ENCODE measurements at regions of chr2 and their contacts with region 1.

Region 1: DNA sequence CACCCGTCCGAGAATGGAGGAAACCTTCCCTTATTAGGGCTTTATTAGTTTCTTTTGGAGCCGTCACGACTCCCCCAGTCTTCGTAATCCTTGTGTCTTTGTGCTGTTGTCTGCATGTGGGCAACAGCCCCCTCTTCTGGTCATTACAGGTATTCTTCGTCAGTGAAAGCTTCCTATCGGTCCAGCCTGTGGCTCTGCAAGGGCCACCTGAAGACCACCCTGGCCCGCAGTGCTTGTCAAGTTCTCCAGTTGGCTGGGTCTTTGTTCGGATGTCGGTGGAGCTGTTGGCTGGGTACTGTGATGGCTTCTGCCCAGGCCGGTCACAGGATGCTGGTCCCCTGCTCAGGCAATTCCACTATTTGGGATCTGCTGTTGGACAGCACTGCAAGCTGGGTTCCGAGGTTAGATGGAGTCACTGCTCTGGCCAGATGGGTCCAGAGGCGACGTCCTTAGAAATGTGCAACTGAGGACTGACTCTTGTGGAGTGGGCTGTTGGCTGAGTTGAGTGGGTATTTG is 19.2 kb downstream of the E2F6 start:
- DNase-seq: peak; percentile 74
- H3K4me3 ChIP-seq: no peak overlapping the region
- H3K27ac ChIP-seq: no peak overlapping the region
- H3K4me1 ChIP-seq: no peaks in the 10 kb centered on the region
- H3K27me3 ChIP-seq: no peaks in the 10 kb centered on the region

Region 2: GRCh38 chr2:10832203-10832936 is 614.4 kb before region 1 on chr2:
- in situ Hi-C with region 1: loop called (anchors 25 kb)
- DNase-seq: peak; percentile 88
- H3K4me3 ChIP-seq: no peak overlapping the region
- H3K27ac ChIP-seq: no peak overlapping the region
- H3K4me1 ChIP-seq: no peaks in the 10 kb centered on the region
- H3K27me3 ChIP-seq: peaks cover 46% of the 10 kb centered on the region

Region 3: GRCh38 chr2:11129598-11130449 is 317.0 kb before region 1 on chr2:
- in situ Hi-C with region 1: loop called (anchors 10 kb)
- DNase-seq: no peak
- H3K4me3 ChIP-seq: peak overlapping the region; percentile 50; the same call in 1 of the 2 replicates
- H3K27ac ChIP-seq: no peak overlapping the region
- H3K4me1 ChIP-seq: peaks cover 6% of the 10 kb centered on the region; the same call in 1 of the 2 replicates
- H3K27me3 ChIP-seq: no peaks in the 10 kb centered on the region

Measured in GM23248 (cell line).